ENCODE measurements at regions of chr18 and their contacts with region 1.

Region 1: DNA sequence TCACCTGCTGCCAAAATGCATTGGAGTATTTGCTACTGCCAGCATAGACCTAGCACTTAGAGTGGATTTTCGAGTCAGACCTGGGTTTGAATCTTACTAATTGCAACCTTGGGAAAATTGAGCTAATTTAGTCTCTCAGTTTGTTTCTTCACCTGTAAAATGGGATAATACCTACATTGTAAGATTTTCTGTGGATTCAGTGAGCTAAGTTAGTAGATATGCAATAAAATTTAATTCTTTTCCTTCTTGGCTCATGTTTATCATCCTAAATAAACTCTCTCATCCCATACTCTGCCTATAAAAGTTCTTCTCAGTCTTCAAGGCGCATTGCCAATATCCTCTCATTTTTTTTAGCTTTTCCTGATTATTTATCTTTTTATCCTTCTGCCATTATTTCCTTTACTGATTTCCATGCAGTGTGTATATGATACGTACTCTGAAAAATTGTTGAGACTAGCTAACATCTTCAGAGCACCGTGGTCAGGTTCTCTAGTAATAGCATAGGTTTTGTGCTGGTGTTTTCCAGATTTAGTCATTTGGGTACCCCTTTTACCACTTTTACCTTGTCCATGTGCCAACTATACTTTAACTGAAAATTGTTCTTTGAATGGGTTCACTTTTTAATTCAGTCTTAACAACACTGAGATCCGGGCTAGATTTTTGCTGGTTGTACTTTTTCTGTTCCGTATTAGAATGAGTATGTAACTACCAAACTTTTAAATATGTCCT is 7.3 kb downstream of the CEP192 start:
- DNase-seq: no peak
- ATAC-seq: no peak
- H3K4me3 ChIP-seq: no peak overlapping the region
- H3K27ac ChIP-seq: no peak overlapping the region
- H3K4me1 ChIP-seq: no peaks in the 10 kb centered on the region
- H3K27me3 ChIP-seq: no peaks in the 10 kb centered on the region

Region 2: DNA sequence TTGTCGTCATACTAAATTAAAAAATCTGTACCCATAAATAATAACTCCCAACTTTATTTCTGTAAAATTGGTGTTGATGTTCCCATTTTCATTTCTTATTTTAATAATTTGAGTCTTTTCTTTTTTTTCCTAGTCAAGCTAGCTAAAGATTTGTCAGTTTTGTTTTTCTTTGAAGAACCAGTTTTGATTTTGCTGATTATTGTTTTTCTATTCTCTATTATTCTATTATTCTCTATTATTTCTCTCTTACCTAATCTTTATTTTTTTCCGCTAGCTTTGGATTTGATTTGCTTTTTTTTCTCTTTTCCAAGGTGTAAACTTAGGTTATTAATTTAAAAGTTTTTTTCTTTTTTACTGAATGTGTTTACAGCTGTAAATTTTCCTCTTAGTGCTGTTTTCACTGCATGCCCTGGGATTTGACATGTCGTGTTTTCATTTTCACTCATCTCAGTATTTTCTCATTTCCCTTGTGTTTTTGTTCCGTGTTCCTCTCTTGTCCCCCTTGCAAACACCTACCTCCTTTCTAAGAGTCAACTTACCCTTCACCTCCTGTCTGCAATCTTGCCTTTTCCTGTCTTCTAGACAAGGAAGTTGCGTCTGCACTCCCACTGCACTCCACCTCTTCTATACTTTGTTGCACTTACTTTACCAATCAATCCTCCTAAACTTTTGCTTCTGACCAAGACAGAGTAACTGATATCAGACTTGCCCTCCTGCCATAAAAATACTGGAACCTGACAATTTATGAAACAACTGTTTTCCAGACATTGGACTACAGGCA is 276.8 kb before region 1 on chr18:
- intact Hi-C with region 1: loop called in 1 of 2 experiments (anchors 5 kb)
- DNase-seq: no peak
- ATAC-seq: no peak
- H3K4me3 ChIP-seq: no peak overlapping the region
- H3K27ac ChIP-seq: no peak overlapping the region
- H3K4me1 ChIP-seq: no peaks in the 10 kb centered on the region
- H3K27me3 ChIP-seq: no peaks in the 10 kb centered on the region

Region 3: GRCh38 chr18:12862467-12862866 is 136.0 kb before region 1 on chr18:
- intact Hi-C with region 1: no loop called
- DNase-seq: no peak
- ATAC-seq: no peak
- H3K4me3 ChIP-seq: no peak overlapping the region
- H3K27ac ChIP-seq: no peak overlapping the region
- H3K4me1 ChIP-seq: no peaks in the 10 kb centered on the region
- H3K27me3 ChIP-seq: no peaks in the 10 kb centered on the region

Measured in aorta (tissue), 5 donors.